Activated T-helper 1 cell treated with anti-CD3 and anti-CD28 coated beads, Interleukin-12 subunit alpha, Interleukin-12 subunit beta, Interleukin-2, Interleukin-4 antibody, amounts not matched to agents 30 ng/mL and 10 ng/mL and 1 ng/mL, durations not matched to agents 14 hours and 24 hours and 36 hours (primary cell): ENCODE measurements at regions of chr9 and their contacts with region 1.

Region 1: GRCh38 chr9:19456996-19457692 is 48.3 kb downstream of the ACER2 start:
- DNase-seq: peak; percentile 59
- H3K4me3 Mint-ChIP-seq: peak overlapping the region; percentile 35
- H3K27ac Mint-ChIP-seq: peak overlapping the region; percentile 16
- H3K4me1 Mint-ChIP-seq: peaks cover 15% of the 10 kb centered on the region
- H3K27me3 Mint-ChIP-seq: peaks cover 9% of the 10 kb centered on the region

Region 2: GRCh38 chr9:18255158-18255629 is 1202.0 kb before region 1 on chr9:
- intact Hi-C with region 1: loop called (anchors 1 kb)
- DNase-seq: peak; percentile 48
- H3K4me3 Mint-ChIP-seq: no peak overlapping the region
- H3K27ac Mint-ChIP-seq: no peak overlapping the region
- H3K4me1 Mint-ChIP-seq: no peaks in the 10 kb centered on the region
- H3K27me3 Mint-ChIP-seq: peaks cover 9% of the 10 kb centered on the region

Region 3: GRCh38 chr9:19085295-19085694 is 371.8 kb before region 1 on chr9:
- intact Hi-C with region 1: loop called (anchors 1 kb)
- DNase-seq: no peak
- H3K4me3 Mint-ChIP-seq: no peak overlapping the region
- H3K27ac Mint-ChIP-seq: peak overlapping the region; percentile 48
- H3K4me1 Mint-ChIP-seq: peaks cover 5% of the 10 kb centered on the region
- H3K27me3 Mint-ChIP-seq: no peaks in the 10 kb centered on the region

Region 4: DNA sequence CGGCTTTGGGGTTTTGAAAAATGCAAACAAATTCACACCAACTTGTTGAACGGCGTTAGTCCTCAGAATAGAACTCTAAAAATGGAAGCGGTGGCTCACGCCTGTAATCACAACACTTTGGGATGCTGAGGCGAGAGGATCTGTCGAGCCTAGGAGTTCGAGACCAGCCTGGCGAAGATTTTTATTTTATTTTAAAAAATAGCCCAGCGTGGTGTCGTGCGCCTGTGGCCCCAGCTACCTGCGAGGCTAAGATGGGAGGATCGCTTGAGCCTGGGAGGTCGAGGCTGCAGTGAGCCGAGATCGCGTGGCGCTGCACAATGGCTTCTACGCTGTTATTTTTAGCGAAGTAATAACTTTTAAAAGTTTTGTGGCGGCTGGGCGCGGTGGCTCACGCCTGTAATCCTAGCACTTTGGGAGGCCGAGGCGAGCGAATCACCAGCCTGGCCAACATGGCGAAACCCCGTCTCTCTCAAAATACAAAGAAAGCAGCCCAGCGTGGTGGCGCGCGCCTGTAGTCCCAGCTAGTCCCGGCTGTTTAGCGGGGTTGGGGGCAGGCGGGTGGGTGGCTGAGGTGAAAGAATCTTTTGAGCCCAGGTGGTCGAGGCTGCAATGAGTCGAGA is 329.2 kb before region 1 on chr9:
- intact Hi-C with region 1: loop called (anchors 1 kb)
- DNase-seq: peak; percentile 18
- H3K4me3 Mint-ChIP-seq: peak overlapping the region; percentile 92
- H3K27ac Mint-ChIP-seq: peak overlapping the region; percentile 89
- H3K4me1 Mint-ChIP-seq: peaks cover 53% of the 10 kb centered on the region
- H3K27me3 Mint-ChIP-seq: no peaks in the 10 kb centered on the region

Region 5: DNA sequence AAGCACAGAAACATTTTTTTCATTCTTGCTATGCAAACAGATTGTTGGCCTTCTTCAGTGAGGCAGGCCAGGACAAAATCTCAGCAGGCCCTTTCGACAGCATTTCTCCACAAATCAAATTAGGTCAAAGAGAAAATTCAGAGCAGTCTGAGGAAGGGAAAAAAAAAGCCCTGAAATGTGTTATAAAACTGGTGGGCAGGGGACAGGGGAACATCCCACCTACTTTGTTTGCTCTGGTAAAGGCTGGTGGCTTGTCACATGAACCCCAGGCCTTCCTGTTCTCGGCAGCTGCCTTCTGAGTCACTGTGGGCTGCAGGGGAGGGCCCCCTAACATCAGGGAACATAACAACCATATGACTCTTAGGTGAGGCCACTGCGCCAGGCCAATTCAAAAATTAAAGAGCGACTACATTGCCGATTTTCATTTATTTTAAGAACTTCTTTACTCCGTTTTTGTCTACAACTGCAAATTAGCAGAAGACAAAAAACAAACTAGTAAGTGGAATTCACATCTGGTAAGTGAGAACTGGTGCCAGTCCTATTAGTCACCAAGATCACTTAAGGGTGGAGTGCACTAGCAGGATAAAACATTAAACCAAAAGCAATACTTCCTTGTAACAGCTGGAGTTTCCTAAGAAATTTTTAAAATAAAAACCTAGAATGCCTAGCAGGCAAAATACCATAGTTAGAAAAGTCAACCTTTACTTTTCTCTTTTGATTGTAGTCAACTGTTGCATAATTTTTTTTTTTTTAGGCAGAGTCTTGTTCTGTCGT is 272.8 kb before region 1 on chr9:
- intact Hi-C with region 1: loop called (anchors 2 kb)
- DNase-seq: peak; percentile 72
- H3K4me3 Mint-ChIP-seq: peak overlapping the region; percentile 67
- H3K27ac Mint-ChIP-seq: peak overlapping the region; percentile 89
- H3K4me1 Mint-ChIP-seq: peaks cover 18% of the 10 kb centered on the region
- H3K27me3 Mint-ChIP-seq: no peaks in the 10 kb centered on the region

Region 6: GRCh38 chr9:19379697-19380046 is 77.5 kb before region 1 on chr9:
- intact Hi-C with region 1: loop called (anchors 1 kb)
- DNase-seq: no peak
- H3K4me3 Mint-ChIP-seq: peak overlapping the region; percentile 98
- H3K27ac Mint-ChIP-seq: peak overlapping the region; percentile 98
- H3K4me1 Mint-ChIP-seq: peaks cover 61% of the 10 kb centered on the region
- H3K27me3 Mint-ChIP-seq: no peaks in the 10 kb centered on the region

Region 7: GRCh38 chr9:19493174-19493811 is 36.1 kb after region 1 on chr9:
- intact Hi-C with region 1: no loop called
- DNase-seq: peak; percentile 25
- H3K4me3 Mint-ChIP-seq: peak overlapping the region; percentile 9
- H3K27ac Mint-ChIP-seq: no peak overlapping the region
- H3K4me1 Mint-ChIP-seq: peaks cover 17% of the 10 kb centered on the region
- H3K27me3 Mint-ChIP-seq: peaks cover 12% of the 10 kb centered on the region

Region 8: DNA sequence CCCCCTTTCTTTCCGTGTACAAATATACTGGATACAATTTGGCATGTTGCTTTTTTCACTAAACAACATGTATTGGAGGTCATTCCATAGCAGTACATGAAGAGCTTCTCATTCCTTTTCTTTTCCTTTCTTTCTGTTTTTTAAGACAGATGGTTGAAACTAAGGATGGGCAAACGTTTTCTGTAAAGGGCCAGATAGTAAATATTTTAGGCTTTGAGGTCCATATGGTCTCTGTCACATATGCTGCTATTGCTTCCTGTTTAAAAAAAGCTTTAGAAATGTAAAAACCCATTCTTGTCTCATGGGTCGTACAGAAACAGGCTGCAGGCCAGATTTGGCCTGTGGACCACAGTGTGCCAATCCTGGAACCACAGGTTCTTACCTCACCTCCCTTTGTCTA is 111.8 kb after region 1 on chr9:
- intact Hi-C with region 1: no loop called
- DNase-seq: no peak
- H3K4me3 Mint-ChIP-seq: no peak overlapping the region
- H3K27ac Mint-ChIP-seq: no peak overlapping the region
- H3K4me1 Mint-ChIP-seq: no peaks in the 10 kb centered on the region
- H3K27me3 Mint-ChIP-seq: peaks cover 3% of the 10 kb centered on the region